ENCODE measurements at regions of chr3 and their contacts with region 1.

Region 1: DNA sequence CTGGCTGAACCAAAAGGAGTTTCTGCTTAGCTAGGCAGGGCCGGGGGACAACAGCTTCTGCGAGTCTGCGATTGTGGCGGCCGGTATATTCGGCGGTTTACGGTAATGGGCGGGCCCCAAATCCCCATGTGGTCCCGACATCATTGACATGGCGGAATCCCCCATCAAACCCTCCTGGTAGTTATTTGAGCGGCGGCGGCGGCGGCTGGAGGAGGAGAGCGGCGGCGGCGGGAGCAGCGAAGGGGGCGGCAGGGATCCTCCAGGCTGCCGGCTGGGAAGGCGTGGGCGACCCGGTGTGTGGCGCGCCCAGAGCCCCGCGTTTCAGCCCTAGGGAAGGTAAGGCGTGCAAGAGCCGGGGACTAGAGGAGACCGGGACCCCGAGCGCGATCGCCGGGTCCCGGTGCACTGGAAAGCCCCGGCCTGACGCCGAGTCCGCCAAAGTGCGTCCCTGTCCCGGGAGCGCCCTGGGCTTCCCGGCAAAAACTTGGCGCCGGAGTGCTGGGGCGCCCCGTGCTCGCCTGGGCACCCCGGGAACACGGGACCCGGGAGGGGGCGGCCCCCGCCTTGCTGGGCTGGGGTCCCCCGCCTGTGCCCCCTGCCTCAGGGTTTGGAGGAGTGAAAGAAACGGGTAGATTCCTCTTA is at the start of gene FNDC3B:
- DNase-seq: peak; percentile 89
- H3K4me3 Mint-ChIP-seq: peak within 1 kb of the TSS; percentile 98
- H3K27ac Mint-ChIP-seq: peak within 1 kb of the TSS; percentile 98
- H3K4me1 Mint-ChIP-seq: peaks cover 25% of the 10 kb centered on the region
- H3K27me3 Mint-ChIP-seq: peaks cover 10% of the 10 kb centered on the region
- total RNA-seq, gene FNDC3B: 24.7 and 26.9 TPM in 2 replicates

Region 2: DNA sequence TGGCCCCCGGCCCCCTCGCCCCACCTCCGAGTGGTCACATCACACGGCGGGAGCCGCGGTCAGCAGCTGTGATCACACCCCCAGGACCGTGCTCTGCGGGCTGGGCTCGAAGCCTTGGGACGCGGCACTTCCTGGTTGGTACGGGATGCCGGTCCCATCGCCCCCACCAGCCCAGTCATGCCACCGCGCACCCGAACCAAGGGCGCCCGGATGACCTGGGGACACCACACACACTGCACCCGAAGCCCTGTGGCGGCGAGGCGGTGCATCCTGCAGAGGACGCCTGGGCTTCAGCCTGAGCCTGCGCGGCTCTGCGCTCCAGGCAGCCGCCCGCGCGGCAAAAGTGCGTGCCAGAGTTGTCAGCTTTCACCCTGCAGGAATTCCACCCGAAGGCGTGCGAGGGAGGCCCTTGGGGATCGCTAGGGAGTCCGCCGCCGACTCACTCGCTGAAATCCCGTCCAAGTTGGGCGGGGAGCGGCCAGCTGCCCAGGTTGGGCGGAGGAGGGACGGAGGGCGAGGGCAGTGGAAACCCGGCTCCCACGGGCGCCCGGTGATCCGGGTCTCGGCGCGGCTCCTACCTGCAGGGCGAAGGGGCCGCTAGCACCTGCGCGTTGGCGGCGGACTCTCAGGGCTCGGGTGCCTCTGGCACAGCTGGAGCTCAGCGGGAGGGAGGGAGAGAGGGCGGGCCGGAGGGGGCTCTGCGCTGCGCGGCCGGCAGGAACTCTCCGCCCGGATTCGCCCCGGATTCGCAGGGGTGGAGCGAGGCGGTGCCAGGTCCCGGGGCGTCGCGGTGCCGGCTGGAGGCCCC is 229.5 kb before region 1 on chr3 and contains the start of gene PLD1:
- intact Hi-C with region 1: loop called (anchors 5 kb)
- DNase-seq: peak; percentile 51
- H3K4me3 Mint-ChIP-seq: peak within 1 kb of the TSS; percentile 77
- H3K27ac Mint-ChIP-seq: peak within 1 kb of the TSS; percentile 47
- H3K4me1 Mint-ChIP-seq: peaks cover 43% of the 10 kb centered on the region
- H3K27me3 Mint-ChIP-seq: peaks cover 24% of the 10 kb centered on the region
- total RNA-seq, gene PLD1: 1.0 and 1.1 TPM in 2 replicates

Region 3: DNA sequence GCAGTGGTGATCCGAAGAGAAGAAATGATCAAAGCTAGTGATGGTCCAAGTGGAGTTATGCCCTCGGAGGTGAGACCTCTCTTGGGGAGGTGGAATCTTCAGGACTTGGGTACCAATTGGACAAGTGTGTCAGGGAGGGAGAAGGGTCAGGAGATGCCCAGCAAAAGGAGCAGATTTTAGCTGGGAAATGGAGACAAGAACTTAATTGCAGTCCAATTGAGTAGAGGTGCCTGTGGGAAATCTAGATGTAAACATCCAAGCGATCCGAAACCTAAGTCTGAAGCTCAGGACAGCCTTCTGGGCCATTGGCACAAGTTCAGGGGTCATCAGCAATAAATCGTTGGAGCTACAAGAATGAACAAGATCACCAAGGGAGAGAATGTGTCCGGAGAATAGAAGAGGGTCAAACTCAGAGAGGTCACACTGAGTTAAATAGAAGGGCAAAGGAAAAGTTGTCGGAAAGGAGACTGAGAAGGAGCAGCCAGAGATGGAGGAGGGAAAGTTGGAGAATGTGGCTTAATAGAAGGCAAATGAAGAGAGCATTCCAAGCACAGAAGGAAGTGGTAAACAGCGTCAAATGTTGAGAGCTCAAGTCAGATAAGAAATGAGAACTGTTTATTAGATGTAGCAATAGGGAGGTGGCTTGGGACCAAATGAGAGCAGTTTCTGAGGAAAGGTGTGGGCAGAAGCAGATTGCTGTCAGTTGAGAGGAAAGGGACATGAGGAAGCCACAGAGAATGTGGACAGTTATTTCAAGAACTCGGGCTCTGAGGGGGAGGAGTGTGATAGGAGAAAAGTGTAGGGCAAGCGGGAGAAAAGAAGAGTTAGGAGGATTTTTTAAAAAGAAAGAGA is 64.3 kb before region 1 on chr3:
- intact Hi-C with region 1: loop called (anchors 5 kb)
- DNase-seq: no peak
- H3K4me3 Mint-ChIP-seq: no peak overlapping the region
- H3K27ac Mint-ChIP-seq: no peak overlapping the region
- H3K4me1 Mint-ChIP-seq: peaks cover 9% of the 10 kb centered on the region
- H3K27me3 Mint-ChIP-seq: no peaks in the 10 kb centered on the region

Region 4: GRCh38 chr3:172129870-172130683 is 90.5 kb after region 1 on chr3:
- intact Hi-C with region 1: loop called (anchors 5 kb)
- DNase-seq: peak; percentile 36
- H3K4me3 Mint-ChIP-seq: no peak overlapping the region
- H3K27ac Mint-ChIP-seq: peak overlapping the region; percentile 82
- H3K4me1 Mint-ChIP-seq: peaks cover 60% of the 10 kb centered on the region
- H3K27me3 Mint-ChIP-seq: no peaks in the 10 kb centered on the region

Region 5: GRCh38 chr3:172341482-172342059 is 302.0 kb after region 1 on chr3:
- intact Hi-C with region 1: loop called (anchors 1 kb)
- DNase-seq: no peak
- H3K4me3 Mint-ChIP-seq: no peak overlapping the region
- H3K27ac Mint-ChIP-seq: no peak overlapping the region
- H3K4me1 Mint-ChIP-seq: peaks cover 4% of the 10 kb centered on the region
- H3K27me3 Mint-ChIP-seq: no peaks in the 10 kb centered on the region